ENCODE measurements at regions of chr19 and their contacts with region 1.

Region 1: DNA sequence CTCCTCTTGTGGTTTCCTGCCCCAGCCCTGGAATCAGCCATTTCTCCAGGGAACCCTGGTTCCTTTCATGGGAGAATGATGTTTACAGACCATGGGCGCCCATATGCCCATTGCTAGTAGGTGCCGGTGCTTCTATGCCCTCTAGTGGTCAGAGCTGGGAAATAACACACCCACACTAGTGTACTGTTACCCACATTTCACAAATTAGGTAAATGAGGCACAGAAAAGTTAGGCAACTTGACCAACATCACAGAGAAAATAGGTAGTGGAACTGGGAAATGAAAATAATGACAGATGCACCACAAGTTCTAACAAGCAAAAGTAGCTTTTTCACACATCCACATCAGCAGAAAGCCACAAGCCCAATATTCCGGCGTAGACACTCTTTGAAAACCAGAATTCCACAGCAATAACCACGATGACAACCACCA is 1.3 kb upstream of the CEACAM3 start:
- DNase-seq: peak; percentile 64
- H3K4me3 Mint-ChIP-seq: no peak overlapping the region
- H3K27ac Mint-ChIP-seq: no peak overlapping the region
- H3K4me1 Mint-ChIP-seq: no peaks in the 10 kb centered on the region
- H3K27me3 Mint-ChIP-seq: peaks cover 28% of the 10 kb centered on the region

Region 2: GRCh38 chr19:41811036-41811435 is 16.0 kb after region 1 on chr19:
- CTCF ChIA-PET with region 1: interaction called, 16 read pairs
- POLR2A ChIA-PET with region 1: no interaction called
- intact Hi-C with region 1: no loop called
- DNase-seq: no peak
- H3K4me3 Mint-ChIP-seq: no peak overlapping the region
- H3K27ac Mint-ChIP-seq: no peak overlapping the region
- H3K4me1 Mint-ChIP-seq: no peaks in the 10 kb centered on the region
- H3K27me3 Mint-ChIP-seq: peaks cover 4% of the 10 kb centered on the region

Region 3: GRCh38 chr19:41821003-41821735 is 26.1 kb after region 1 on chr19:
- CTCF ChIA-PET with region 1: interaction called, 107 read pairs
- POLR2A ChIA-PET with region 1: interaction called, 3 read pairs
- intact Hi-C with region 1: loop called (anchors 1 kb)
- DNase-seq: peak; percentile 53
- H3K4me3 Mint-ChIP-seq: no peak overlapping the region
- H3K27ac Mint-ChIP-seq: no peak overlapping the region
- H3K4me1 Mint-ChIP-seq: no peaks in the 10 kb centered on the region
- H3K27me3 Mint-ChIP-seq: peaks cover 15% of the 10 kb centered on the region

Region 4: DNA sequence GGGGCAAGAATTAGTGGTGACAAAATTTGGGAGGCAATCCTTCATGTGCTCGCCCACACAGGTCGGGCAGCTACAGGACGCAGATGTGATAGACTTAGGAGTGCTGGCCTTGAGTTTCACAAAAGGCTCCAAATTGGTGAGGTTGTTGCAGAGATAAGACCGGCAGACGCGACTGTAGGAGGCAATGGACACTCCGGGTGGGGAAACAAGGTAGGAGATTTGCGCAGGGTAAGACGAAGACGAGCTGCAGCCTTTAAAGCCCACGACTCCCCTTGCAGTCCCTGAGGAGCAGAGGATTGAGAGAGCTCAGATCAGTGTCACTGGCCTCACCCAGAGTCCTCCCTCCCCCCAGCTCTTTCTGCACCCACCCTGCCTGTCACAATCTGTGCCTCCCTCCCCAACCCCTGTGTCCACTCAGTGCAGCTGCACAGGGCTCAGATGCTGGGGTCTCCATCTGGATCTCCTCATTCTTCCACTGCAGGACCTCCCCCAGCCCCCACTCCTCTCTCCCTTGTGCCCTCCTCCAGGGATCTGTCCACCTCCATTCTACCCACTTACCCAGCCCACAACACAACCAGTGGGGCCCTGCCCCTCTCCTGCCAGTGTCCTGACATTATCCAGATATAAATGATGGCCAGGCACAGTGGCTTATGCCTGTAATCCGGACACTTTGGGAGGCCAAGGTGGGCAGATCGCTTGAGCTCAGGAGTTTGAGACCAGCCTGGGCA is 43.1 kb after region 1 on chr19:
- CTCF ChIA-PET with region 1: interaction called, 17 read pairs
- POLR2A ChIA-PET with region 1: no interaction called
- intact Hi-C with region 1: loop called (anchors 5 kb)
- DNase-seq: no peak
- H3K4me3 Mint-ChIP-seq: no peak overlapping the region
- H3K27ac Mint-ChIP-seq: no peak overlapping the region
- H3K4me1 Mint-ChIP-seq: no peaks in the 10 kb centered on the region
- H3K27me3 Mint-ChIP-seq: peaks cover 23% of the 10 kb centered on the region

Region 5: DNA sequence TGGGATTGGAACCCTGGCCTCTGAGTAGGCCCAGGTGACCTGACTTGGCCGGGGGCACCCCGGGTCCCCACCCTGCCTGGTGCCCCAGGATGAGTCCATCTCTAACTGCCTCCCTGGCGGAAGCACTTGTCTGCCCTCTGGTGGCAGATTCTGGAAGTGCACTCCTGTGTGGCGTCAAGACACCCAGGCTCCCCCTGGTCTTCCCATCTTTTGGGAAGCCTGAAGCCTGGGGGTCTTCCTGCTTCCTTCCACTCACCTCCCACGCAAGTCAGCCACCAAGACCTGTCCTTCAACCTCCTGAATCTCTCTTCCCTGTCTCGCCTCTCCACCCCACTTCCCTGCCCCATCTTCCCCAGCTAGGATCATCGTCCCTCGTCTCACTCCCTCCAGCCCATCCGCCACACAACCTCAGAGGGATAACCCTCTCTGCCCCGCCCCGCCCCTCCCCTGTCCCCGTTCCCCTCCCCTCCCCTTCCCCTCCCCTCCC is 156.7 kb after region 1 on chr19:
- CTCF ChIA-PET with region 1: interaction called, 21 read pairs
- POLR2A ChIA-PET with region 1: no interaction called
- intact Hi-C with region 1: no loop called
- DNase-seq: peak; percentile 91
- H3K4me3 Mint-ChIP-seq: no peak overlapping the region
- H3K27ac Mint-ChIP-seq: no peak overlapping the region
- H3K4me1 Mint-ChIP-seq: peaks cover 15% of the 10 kb centered on the region
- H3K27me3 Mint-ChIP-seq: no peaks in the 10 kb centered on the region

Region 6: GRCh38 chr19:42283143-42284065 is 488.4 kb after region 1 on chr19:
- CTCF ChIA-PET with region 1: no interaction called
- POLR2A ChIA-PET with region 1: no interaction called
- intact Hi-C with region 1: no loop called
- DNase-seq: peak; percentile 97
- H3K4me3 Mint-ChIP-seq: no peak overlapping the region
- H3K27ac Mint-ChIP-seq: no peak overlapping the region
- H3K4me1 Mint-ChIP-seq: peaks cover 44% of the 10 kb centered on the region
- H3K27me3 Mint-ChIP-seq: no peaks in the 10 kb centered on the region